ENCODE measurements at regions of chr22 and their contacts with region 1.

Region 1: GRCh38 chr22:39170825-39171622 is 18.5 kb upstream of the CBX7 start:
- DNase-seq: peak; percentile 84 to 89 (median 88)
- ATAC-seq: peak; percentile 91
- H3K4me3 ChIP-seq: no peak overlapping the region
- H3K4me1 ChIP-seq: peaks cover 16% of the 10 kb centered on the region
- CTCF ChIP-seq: peak; percentile 96

Region 2: GRCh38 chr22:39309881-39310714 is 139.1 kb after region 1 on chr22:
- intact Hi-C with region 1: loop called (anchors 5 to 10 kb)
- DNase-seq: no peak
- ATAC-seq: no peak
- H3K4me3 ChIP-seq: no peak overlapping the region
- H3K4me1 ChIP-seq: peaks cover 4% of the 10 kb centered on the region
- CTCF ChIP-seq: no peak

Region 3: DNA sequence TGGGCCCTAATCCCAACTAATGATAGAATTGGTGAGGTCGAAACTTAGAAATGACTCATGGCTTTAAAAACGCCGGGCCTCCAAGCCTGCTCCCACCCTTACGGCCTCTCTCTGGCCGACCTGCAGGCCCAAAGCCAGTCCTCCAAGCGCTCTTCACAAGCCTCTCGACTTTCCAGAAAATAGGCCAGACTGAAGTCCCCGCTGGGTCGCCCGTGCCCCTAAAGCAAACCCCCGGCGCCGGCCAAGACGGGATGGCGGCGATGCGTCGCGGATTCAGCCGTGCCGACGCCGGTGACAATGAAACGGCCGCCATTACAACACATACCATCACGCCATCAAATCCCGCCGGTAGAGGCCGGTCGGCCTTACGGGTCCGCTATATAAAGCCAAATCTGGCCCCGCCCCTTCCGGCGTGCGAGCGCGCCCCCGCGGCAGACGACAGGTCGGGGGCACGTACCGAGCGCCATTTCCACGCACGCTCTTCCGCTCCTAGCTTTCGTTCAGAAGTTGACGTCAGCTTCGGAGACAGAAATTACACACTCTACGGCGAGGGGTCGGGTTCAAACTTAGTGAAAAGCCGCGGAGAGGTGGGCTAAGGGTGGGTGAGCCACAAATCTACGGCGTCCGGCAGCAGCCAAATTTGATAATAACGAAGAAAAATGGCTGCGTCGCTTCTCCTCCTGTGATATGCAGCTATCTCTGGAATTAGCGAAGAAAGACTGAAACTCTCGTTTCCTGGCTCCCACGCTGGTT is 148.4 kb after region 1 on chr22 and contains the start of gene RPL3:
- intact Hi-C with region 1: loop called (anchors 5 to 10 kb)
- DNase-seq: peak; percentile 97 to 99 (median 98)
- ATAC-seq: peak; percentile 92
- H3K4me3 ChIP-seq: peak within 1 kb of the TSS; percentile 70
- H3K4me1 ChIP-seq: peaks cover 35% of the 10 kb centered on the region
- CTCF ChIP-seq: no peak
- total RNA-seq, gene RPL3: 1,561 to 1,749 (median 1,709) TPM

Measured in mucosa of descending colon (tissue), 3 donors.